Activated T-helper 1 cell treated with anti-CD3 and anti-CD28 coated beads, Interleukin-12 subunit alpha, Interleukin-12 subunit beta, Interleukin-2, Interleukin-4 antibody, amounts not matched to agents 30 ng/mL and 10 ng/mL and 1 ng/mL, durations not matched to agents 14 hours and 24 hours and 36 hours (primary cell): ENCODE measurements at regions of chr14 and their contacts with region 1.

Region 1: DNA sequence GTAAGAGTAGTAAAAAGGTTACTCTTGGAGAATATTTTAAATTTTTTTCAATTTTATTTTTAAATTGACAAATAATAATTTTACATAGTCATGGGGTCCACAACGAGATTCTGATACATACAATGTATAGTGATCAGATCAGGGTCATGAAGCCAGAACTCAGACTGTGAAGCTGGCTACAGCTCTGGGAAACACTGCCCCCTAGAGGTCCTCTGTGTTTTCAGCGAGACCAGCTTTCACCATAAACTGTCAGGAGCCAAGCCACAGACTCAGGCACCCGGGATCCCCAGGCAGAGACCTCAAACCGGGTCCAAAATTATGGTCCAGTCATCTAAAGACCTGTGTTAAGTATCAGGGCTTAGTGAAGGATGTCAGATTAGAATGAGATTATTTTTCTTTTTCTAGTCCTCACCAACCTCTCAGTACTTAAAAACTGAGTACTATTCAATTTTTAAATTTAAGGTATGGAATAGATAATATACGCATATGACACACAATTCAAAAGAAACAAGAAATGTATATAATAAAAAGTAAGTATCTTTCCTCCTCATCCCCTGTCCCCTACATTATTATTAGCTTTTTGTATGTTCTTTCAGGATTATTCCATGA is 397.1 kb downstream of the MDGA2 start:
- DNase-seq: peak; percentile 4
- H3K4me3 Mint-ChIP-seq: no peak overlapping the region
- H3K27ac Mint-ChIP-seq: no peak overlapping the region
- H3K4me1 Mint-ChIP-seq: no peaks in the 10 kb centered on the region
- H3K27me3 Mint-ChIP-seq: no peaks in the 10 kb centered on the region

Region 2: DNA sequence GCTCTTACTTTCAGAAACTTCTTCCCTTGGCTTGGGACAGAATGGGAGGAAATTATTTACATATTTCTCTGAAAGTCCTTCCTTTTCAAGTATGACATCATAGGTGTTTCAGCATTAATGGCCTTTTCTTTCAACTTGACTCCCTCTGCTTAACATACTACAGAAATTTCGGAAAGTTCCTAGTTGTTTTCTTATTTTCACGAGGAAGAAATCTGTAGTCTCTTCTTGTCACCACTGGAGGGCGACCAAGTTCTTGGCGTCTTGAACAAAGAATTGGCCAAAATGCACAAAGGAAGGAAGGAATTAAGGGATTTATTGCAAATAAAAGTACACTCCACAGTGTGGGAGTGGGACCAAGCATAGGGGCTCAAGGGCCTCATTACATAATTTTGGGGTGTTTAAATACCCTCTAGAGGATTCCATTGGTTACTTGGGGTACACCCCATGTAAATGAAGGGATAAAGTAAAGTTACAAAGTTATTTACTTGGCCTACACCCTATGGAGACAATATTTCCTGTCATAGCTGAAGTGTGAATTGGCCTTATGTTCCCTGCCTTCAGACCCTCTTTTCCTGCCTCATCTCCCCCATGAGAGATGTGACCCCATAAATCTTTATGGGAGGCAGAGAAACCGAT is 697.2 kb before region 1 on chr14:
- intact Hi-C with region 1: loop called (anchors 5 kb)
- DNase-seq: no peak
- H3K4me3 Mint-ChIP-seq: no peak overlapping the region
- H3K27ac Mint-ChIP-seq: no peak overlapping the region
- H3K4me1 Mint-ChIP-seq: no peaks in the 10 kb centered on the region
- H3K27me3 Mint-ChIP-seq: no peaks in the 10 kb centered on the region

Region 3: GRCh38 chr14:46626876-46627275 is 651.5 kb before region 1 on chr14:
- intact Hi-C with region 1: no loop called
- DNase-seq: no peak
- H3K4me3 Mint-ChIP-seq: no peak overlapping the region
- H3K27ac Mint-ChIP-seq: no peak overlapping the region
- H3K4me1 Mint-ChIP-seq: no peaks in the 10 kb centered on the region
- H3K27me3 Mint-ChIP-seq: no peaks in the 10 kb centered on the region

Region 4: DNA sequence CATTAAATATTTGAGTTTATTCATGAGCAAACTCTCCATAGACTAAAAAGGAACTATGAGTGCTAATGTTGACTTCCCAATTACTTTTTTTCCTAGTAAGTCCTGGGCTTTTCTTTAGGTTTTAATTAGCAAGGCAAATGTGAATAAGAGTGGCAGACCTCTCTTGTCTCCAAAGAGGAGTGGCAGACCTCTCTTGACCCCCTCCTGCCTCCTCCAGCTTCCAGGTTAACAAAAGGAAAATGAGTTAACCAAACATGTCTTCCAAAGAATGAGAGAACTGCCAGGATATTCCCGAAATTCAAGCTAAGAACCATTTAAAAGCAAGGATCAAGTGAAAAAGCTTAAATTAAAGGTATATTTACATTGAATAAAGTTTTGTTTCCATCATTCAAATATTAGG is 143.9 kb after region 1 on chr14:
- intact Hi-C with region 1: no loop called
- DNase-seq: no peak
- H3K4me3 Mint-ChIP-seq: no peak overlapping the region
- H3K27ac Mint-ChIP-seq: no peak overlapping the region
- H3K4me1 Mint-ChIP-seq: no peaks in the 10 kb centered on the region
- H3K27me3 Mint-ChIP-seq: no peaks in the 10 kb centered on the region

Region 5: DNA sequence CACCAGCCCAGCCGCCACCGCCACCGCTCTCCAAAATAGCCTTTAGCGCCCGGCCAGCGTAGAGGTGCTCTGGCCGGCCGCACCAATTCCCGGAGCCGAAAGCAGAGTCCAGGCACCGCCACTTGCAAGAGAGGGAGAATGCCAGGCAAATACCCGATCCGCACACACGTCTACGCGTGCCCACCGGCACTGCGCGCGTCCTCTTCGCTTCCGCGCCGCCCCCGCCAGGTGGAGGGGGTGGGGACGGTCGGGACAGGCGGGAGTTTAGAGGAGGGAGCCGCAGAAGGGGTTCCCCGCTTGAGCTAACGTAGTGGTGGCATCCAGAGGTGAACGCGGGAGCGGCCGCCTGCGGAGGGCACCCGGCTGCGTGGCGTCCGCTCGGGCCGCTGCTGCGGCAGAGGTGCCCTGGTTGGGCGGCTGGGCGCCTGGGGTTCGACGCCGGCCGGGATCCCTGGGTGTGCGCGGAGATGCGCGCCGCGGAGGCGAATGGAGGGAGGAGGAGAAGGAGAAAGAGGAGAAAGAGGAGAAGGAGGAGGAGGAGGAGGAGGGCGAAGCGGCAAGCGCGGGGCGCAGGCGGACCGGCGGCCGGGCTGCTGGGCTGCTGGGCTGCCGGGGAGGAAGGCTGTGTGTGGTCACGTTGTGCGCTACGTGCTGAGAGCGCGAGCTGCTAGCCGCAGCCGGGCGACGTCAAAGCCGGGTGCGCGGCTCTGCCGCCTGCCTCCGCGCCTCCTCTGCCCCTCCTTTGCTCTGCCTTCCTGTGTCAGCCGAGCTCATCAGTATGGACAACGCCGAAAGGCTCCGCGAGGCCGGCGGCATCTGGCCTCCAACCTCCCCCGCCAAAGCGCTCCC is 397.4 kb after region 1 on chr14 and contains the start of gene MDGA2:
- intact Hi-C with region 1: no loop called
- DNase-seq: no peak
- H3K4me3 Mint-ChIP-seq: no peak within 1 kb of the TSS
- H3K27ac Mint-ChIP-seq: no peak within 1 kb of the TSS
- H3K4me1 Mint-ChIP-seq: peaks cover 5% of the 10 kb centered on the region
- H3K27me3 Mint-ChIP-seq: peaks cover 38% of the 10 kb centered on the region
- total RNA-seq, gene MDGA2: not detected in 2 replicates